Common myeloid progenitor, CD34-positive (primary cell): ENCODE measurements at regions of chr1 and their contacts with region 1.

Region 1: DNA sequence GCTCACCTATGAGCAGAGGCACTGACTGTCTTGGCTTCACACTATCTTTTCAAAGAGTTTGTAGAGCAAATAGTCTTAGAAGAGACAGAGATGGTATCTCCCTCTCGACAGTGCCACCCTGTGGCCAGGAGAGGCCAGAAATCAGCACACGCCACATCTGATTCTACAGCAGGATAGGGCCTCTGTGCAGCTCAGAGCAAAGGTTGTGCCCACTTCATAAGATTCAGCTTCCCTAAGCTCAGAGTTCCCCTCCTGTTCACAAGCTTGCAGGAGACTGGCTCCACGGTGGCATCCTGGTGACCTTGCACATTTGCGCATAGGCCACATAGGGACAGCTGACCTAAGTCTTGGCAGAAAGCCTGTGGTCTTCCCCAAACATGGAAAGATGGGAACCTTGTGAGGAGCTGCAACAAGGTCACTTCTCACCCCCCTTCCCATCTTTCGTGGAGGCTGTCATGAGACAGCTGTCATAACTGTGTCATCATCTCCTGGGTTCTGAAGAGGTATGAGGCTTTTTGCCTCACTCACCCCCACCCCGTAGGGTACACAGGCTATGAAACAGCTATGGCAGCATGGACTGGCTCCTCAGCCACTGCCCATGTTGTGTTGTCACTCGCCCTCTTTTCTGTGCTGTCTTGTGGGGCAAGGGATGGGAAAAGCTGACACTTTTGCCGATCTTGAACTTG is 3.0 kb downstream of the ITLN2 start:
- DNase-seq: peak; percentile 65 to 85 (median 77)
- H3K4me3 ChIP-seq: no peak overlapping the region
- H3K27ac ChIP-seq: no peak overlapping the region
- H3K4me1 ChIP-seq: peaks cover 0 to 12% (median 0%) of the 10 kb centered on the region in 4 experiments
- H3K27me3 ChIP-seq: no peaks in the 10 kb centered on the region

Region 2: DNA sequence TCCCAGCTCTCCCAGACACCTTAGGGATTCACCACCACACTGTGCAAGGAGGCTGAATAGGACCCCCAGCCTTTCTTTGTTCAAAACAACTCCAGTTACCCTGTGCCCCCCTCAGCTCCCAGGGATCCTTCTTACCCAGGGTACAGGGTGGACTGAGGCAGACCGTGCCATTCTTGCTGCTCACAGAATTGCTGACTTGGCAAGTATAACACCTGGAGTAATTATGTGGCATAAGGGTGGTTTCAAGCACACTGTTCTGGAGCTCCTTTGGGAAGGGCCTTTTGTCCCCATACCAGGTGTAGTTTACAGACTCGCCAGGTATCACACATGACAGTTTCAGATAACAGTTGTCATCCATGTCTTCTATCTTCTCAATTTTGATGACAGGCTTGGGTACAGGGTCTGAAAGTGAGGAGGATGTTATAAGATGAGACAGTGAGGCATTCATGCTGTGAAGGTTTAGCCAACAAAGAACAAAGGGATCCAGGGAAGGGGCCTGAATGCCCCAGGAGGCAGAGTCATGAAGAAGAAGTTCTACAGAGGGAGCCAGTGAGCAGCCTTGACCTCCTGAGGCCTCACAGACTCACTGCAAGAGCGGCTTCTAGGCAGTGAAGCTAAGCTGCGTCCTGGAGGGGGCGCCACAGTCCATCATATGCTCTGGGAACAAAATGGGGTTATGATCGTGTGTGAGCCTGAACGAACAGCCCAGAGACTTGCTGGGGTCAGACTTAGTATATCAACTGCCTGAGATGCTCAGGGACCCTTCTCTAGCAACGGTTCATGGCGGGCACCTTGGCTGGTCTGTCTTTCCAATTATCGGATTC is 270.3 kb before region 1 on chr1:
- CTCF ChIA-PET with region 1: interaction called, 48 read pairs
- POLR2A ChIA-PET with region 1: no interaction called
- DNase-seq: peak; percentile 88 to 94 (median 89)
- H3K4me3 ChIP-seq: no peak overlapping the region
- H3K27ac ChIP-seq: no peak overlapping the region
- H3K4me1 ChIP-seq: peaks cover 0 to 24% (median 13%) of the 10 kb centered on the region in 4 experiments
- H3K27me3 ChIP-seq: no peaks in the 10 kb centered on the region

Region 3: DNA sequence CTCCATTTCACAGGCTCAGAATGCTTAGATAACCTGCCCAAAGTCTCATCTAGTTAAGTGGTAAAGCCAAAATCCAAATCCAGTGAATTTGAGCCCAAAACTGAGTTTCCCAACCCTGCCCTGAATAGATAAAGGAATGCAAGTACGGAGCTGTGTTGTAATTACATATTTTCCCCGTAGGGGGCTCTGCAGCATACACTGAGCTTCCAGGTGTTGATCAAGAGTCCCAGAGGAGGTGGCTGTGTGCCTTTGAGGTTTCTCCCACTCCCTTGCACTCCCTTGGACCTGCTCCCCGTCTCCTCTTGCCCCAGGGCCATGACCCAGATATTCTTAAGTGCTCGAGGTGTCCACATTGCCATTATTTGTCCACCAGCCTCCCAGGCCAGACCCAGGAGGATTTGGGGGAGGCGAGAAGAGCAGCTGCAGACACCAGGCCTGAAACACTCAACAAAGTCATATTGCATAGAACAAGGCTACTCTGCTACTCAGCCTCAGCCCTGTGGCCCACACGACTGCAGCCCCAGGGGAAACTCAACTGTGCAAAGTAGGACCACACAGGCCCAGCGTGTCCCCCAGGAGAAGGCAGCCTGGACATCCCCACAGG is 174.0 kb before region 1 on chr1:
- CTCF ChIA-PET with region 1: interaction called, 71 read pairs
- POLR2A ChIA-PET with region 1: no interaction called
- DNase-seq: peak; percentile 35 to 50 (median 41)
- H3K4me3 ChIP-seq: no peak overlapping the region
- H3K27ac ChIP-seq: no peak overlapping the region
- H3K4me1 ChIP-seq: peaks cover 5 to 16% (median 10%) of the 10 kb centered on the region in 4 experiments
- H3K27me3 ChIP-seq: no peaks in the 10 kb centered on the region

Region 4: GRCh38 chr1:160837558-160838205 is 113.9 kb before region 1 on chr1:
- CTCF ChIA-PET with region 1: interaction called, 152 read pairs
- POLR2A ChIA-PET with region 1: interaction called, 3 read pairs
- DNase-seq: peak; percentile 94 to 99 (median 98)
- H3K4me3 ChIP-seq: peak overlapping the region in 3 of 7 experiments; percentile 32 to 40 (median 37)
- H3K27ac ChIP-seq: peak overlapping the region; percentile 65 to 80
- H3K4me1 ChIP-seq: peaks cover 38 to 77% (median 72%) of the 10 kb centered on the region in 4 experiments
- H3K27me3 ChIP-seq: no peaks in the 10 kb centered on the region

Region 5: DNA sequence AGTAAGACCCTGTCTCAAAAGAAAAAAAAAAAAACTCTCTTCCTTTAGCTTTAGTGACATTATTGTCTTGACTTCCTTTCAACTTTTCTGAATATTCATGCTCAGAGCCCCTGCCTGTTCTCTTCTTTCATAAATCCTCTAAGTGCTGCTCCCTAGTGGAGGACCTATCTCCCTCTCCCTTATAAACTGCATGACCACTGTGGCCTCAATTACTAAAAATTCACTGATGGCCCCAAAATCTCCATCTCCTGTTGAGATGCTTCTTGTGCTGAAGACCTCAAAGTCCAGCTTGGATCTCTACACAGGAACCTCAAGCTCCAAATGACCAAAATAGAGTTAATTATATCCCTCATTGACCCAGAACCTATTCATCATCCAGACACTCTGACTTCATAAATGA is 74.4 kb before region 1 on chr1:
- CTCF ChIA-PET with region 1: interaction called, 20 read pairs
- POLR2A ChIA-PET with region 1: no interaction called
- DNase-seq: peak; percentile 66 to 78 (median 76)
- H3K4me3 ChIP-seq: no peak overlapping the region
- H3K27ac ChIP-seq: no peak overlapping the region
- H3K4me1 ChIP-seq: peaks cover 0 to 11% (median 7%) of the 10 kb centered on the region in 4 experiments
- H3K27me3 ChIP-seq: no peaks in the 10 kb centered on the region